Gastrocnemius medialis (tissue), 4 donors: ENCODE measurements at regions of chr5 and their contacts with region 1.

Region 1: DNA sequence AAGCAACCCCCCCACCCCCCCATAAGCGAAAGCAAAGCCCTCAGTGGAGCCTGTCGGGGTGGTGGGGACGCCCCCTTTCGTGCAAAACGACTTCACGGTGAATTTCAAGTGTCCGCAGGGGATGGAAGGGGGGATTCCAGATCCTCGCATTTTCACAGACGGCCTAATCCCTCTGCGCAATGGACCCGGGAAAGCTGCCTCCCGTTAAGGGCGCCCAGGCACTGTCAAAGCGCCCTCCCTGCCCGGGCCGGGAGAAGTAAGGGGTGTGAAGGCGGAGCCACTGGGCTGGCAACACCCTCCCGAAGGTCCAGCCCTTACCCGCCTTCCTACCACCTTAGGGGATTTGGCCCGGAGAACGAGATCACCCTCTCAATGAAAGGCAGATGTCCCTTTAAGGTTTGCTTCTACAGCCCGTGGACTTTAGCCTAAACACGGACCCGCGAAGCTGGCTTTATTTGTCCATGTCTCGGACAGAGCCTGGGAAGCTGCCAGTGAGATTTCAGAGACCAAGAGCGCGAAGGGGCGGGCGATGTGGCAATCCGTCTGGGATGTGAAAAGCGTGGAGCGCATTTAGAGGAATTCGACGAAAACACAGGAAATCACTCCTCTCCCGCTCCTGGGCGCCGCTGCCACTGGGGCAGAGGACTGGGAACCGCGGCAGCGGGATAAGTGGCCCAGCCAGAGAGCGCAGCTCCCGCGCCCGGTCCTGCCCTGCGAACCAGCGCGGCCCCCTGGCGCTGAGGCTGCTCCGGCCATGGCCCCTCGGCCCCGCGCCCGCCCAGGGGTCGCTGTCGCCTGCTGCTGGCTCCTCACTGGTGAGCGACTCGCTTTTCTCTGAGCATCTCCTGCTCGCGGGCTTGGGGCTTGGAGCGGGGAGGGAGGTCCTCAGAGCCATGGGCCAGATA is at the starts of genes ITGA1 and PELO:
- DNase-seq: peak; percentile 33 to 50
- ATAC-seq: peak; percentile 63 to 74
- H3K4me3 ChIP-seq: peak within 1 kb of the TSS; percentile 61 to 76 (median 68)
- H3K27ac ChIP-seq: peak within 1 kb of the TSS; percentile 68 to 83 (median 76)
- H3K4me1 ChIP-seq: peaks cover 7 to 11% of the 10 kb centered on the region in 2 donors
- H3K27me3 ChIP-seq: peaks cover 0 to 7% (median 0%) of the 10 kb centered on the region in 3 donors
- CTCF ChIP-seq: peak in 4 of 5 experiments; percentile 29 to 41 (median 38)
- POLR2A ChIP-seq: peak; percentile 27 to 44
- total RNA-seq, gene ITGA1: 5.7 to 20.4 (median 12.4) TPM
- total RNA-seq, gene PELO: 13.8 to 28.5 (median 18.5) TPM

Region 2: DNA sequence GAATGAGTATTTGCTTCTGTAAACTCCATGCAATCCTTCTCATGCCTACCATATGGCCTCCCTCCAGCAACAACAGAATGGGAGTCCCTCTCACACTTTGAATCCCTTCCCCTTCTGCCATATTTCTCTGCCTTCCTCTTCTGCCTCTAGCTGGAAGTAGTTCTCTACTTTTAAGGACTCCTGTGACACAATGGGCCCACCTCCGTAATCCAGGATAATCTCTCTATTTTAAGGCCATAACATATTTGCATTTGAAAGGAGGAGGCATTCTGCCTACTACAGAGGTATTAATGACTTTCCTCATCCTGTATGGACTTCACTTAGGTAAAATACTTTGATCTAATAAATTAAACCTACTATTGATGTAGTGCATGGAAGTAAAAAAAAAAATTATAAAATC is 155.6 kb before region 1 on chr5:
- in situ Hi-C with region 1: no loop called
- intact Hi-C with region 1: no loop called
- DNase-seq: no peak
- ATAC-seq: no peak
- H3K4me3 ChIP-seq: no peak overlapping the region
- H3K27ac ChIP-seq: no peak overlapping the region
- H3K4me1 ChIP-seq: no peaks in the 10 kb centered on the region
- H3K27me3 ChIP-seq: no peaks in the 10 kb centered on the region
- CTCF ChIP-seq: no peak
- POLR2A ChIP-seq: no peak

Region 3: DNA sequence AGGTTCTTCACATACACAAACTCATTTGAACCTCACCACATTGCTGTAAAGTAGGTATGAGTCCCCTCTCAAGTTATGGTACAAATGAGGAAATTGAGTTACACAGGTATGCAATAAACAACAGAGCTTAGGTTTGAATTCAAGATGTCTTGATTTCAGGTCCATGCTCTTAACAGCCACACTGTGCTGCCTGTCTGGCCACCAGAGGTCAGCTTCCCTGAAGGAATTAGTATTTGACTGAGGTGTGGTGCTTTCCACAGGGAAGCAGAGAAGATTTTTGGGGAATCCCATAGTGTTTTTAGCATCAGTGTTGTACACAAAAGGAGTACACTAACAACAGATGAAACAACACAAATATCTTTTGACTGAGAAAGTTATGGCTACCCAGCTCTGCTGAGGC is 94.6 kb before region 1 on chr5:
- in situ Hi-C with region 1: no loop called
- intact Hi-C with region 1: loop called (anchors 5 kb)
- DNase-seq: no peak
- ATAC-seq: no peak
- H3K4me3 ChIP-seq: no peak overlapping the region
- H3K27ac ChIP-seq: no peak overlapping the region
- H3K4me1 ChIP-seq: no peaks in the 10 kb centered on the region
- H3K27me3 ChIP-seq: no peaks in the 10 kb centered on the region
- CTCF ChIP-seq: peak; percentile 14 to 60 (median 30)
- POLR2A ChIP-seq: no peak

Region 4: DNA sequence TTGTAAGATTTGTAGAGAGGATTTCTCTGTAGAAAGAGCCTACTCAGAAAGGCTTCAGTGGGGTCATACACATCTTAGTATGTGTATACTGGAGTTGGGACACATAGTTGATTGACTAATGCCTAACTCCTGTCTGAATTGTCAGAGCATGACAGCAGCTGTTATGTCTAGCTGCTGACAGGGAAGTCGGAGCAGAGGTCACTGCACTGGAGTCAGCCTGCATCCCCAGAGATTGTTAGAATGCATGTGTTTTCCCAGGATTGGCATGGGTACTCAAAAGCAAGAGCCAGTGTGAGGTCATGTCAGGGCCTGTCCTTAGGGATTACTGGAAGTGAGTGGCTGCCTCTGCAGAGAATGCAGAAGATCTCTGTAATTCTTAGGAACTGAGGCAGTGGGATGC is 82.6 kb after region 1 on chr5:
- in situ Hi-C with region 1: no loop called
- intact Hi-C with region 1: no loop called
- DNase-seq: peak in 1 of 2 donors; percentile 19
- ATAC-seq: no peak
- H3K4me3 ChIP-seq: no peak overlapping the region
- H3K27ac ChIP-seq: no peak overlapping the region
- H3K4me1 ChIP-seq: peaks cover 0 to 5% of the 10 kb centered on the region in 2 donors
- H3K27me3 ChIP-seq: no peaks in the 10 kb centered on the region
- CTCF ChIP-seq: no peak
- POLR2A ChIP-seq: no peak

Region 5: DNA sequence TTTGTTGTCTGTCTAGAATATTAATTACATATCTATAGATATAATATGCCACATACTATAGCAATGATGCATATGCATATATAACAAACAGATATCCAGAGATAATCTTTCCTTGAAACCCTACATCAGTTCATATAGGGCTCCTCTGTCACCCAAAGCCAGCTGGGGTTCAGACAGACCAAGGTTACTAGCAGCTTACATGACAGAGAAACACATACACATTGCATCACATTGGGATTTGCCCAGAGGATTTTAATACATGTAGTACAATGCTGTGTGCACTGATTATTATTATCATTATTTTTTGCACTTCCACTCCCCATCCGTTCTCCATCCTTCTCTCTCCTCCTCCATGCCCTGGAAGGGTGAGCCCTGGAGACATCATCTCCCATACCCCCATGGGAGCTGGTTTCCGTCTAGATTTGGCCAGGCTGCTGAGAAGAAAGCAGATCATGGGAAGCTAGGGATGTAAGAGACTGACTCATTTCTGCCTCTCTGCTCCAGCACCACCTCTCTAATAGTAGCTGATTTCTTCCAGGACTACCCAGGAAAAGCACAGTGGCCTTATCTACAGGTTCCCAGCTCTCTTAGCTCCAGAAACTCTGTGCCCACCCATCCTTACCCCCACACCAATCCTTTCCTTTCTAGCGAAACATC is 715.8 kb after region 1 on chr5:
- in situ Hi-C with region 1: no loop called
- intact Hi-C with region 1: no loop called
- DNase-seq: no peak
- ATAC-seq: no peak
- H3K4me3 ChIP-seq: no peak overlapping the region
- H3K27ac ChIP-seq: no peak overlapping the region
- H3K4me1 ChIP-seq: no peaks in the 10 kb centered on the region
- H3K27me3 ChIP-seq: no peaks in the 10 kb centered on the region
- CTCF ChIP-seq: no peak
- POLR2A ChIP-seq: no peak